HCT116 (cell line): ENCODE measurements at regions of chr21 and their contacts with region 1.

Region 1: GRCh38 chr21:15293240-15293639 is 228.4 kb upstream of the NRIP1 start:
- DNase-seq: peak; percentile 15
- ATAC-seq: peak; percentile 36; the same call in 1 of the 2 replicates
- H3K4me3 ChIP-seq: no peak overlapping the region
- H3K27ac ChIP-seq: no peak overlapping the region
- H3K4me1 ChIP-seq: peaks cover 7 to 10% of the 10 kb centered on the region in 2 experiments
- H3K27me3 ChIP-seq: no peaks in the 10 kb centered on the region
- CTCF ChIP-seq: no peak
- POLR2A ChIP-seq: no peak
- RAD21 ChIP-seq: no peak

Region 2: GRCh38 chr21:15221799-15222386 is 71.3 kb before region 1 on chr21:
- CTCF ChIA-PET with region 1: no interaction called
- POLR2A ChIA-PET with region 1: no interaction called
- RAD21 ChIA-PET with region 1: no interaction called
- intact Hi-C with region 1: loop called (anchors 10 kb)
- DNase-seq: peak; percentile 22
- ATAC-seq: peak; percentile 53
- H3K4me3 ChIP-seq: no peak overlapping the region
- H3K27ac ChIP-seq: peak overlapping the region; percentile 22; the same call in 1 of the 2 replicates
- H3K4me1 ChIP-seq: peaks cover 0 to 37% of the 10 kb centered on the region in 2 experiments; a peak in 2 of 4 replicates
- H3K27me3 ChIP-seq: no peaks in the 10 kb centered on the region
- CTCF ChIP-seq: no peak
- POLR2A ChIP-seq: no peak
- RAD21 ChIP-seq: no peak